Panc1 (cell line): ENCODE measurements at regions of chr3 and their contacts with region 1.

Region 1: DNA sequence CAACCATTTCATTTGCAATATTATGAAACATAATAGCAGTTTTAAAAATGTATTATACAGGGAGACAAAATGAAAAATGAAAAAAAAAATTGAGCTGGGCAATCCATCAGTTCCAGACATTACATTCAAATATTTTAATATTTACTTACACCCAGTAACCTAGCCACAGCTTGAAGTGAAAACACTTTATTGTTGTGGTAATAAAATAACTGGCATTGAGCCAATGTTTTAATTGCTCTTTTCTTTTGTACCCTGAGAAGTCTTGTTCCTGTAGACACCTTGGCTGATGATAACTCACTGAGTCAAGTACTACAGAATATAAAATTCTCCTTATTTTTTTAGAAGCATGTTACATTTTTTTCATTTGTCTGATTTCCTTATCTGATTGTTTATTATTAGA is 180.6 kb downstream of the ROBO1 start:
- DNase-seq: no peak
- ATAC-seq: no peak
- H3K4me3 ChIP-seq: no peak overlapping the region
- H3K27ac ChIP-seq: no peak overlapping the region
- H3K4me1 ChIP-seq: no peaks in the 10 kb centered on the region
- H3K27me3 ChIP-seq: no peaks in the 10 kb centered on the region
- CTCF ChIP-seq: no peak

Region 2: GRCh38 chr3:77726517-77726916 is 1860.6 kb before region 1 on chr3:
- CTCF ChIA-PET with region 1: no interaction called
- POLR2A ChIA-PET with region 1: no interaction called
- in situ Hi-C with region 1: no loop called
- intact Hi-C with region 1: no loop called
- DNase-seq: no peak
- ATAC-seq: no peak
- H3K4me3 ChIP-seq: no peak overlapping the region
- H3K27ac ChIP-seq: no peak overlapping the region
- H3K4me1 ChIP-seq: no peaks in the 10 kb centered on the region
- H3K27me3 ChIP-seq: no peaks in the 10 kb centered on the region
- CTCF ChIP-seq: no peak

Region 3: GRCh38 chr3:79436387-79436786 is 150.8 kb before region 1 on chr3:
- CTCF ChIA-PET with region 1: no interaction called
- POLR2A ChIA-PET with region 1: no interaction called
- in situ Hi-C with region 1: no loop called
- intact Hi-C with region 1: no loop called
- DNase-seq: no peak
- ATAC-seq: no peak
- H3K4me3 ChIP-seq: no peak overlapping the region
- H3K27ac ChIP-seq: no peak overlapping the region
- H3K4me1 ChIP-seq: no peaks in the 10 kb centered on the region
- H3K27me3 ChIP-seq: no peaks in the 10 kb centered on the region
- CTCF ChIP-seq: no peak

Region 4: DNA sequence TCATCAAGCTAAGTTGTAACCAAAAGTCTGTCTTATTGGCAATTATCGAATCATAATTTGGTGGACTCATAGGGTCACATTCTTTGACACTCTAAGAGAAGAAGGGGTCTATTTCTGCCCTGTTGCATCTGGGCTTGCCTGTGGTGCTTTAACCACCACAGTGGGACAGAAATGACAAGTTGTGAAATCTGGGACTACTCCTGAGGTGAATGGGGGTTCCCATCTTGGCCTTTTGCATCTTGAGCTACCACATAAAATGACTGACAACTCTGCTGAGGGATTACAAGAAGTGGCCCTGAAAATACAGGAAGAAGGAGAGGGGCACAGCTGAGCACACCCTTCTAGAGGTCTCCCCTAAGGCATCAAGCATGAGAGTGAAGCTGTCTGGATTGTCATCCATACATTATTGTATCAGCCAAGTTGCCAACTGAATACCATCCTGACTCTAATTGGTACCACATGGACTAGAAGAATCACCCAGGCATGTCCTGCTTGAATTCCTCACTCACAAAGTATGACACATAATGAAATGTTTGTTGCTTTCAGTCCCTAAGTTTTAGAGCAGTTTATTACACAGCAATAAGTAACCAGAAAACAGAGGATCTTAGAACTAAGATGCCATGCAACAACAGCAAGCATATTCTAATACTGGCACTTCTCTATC is 125.9 kb before region 1 on chr3:
- CTCF ChIA-PET with region 1: no interaction called
- POLR2A ChIA-PET with region 1: no interaction called
- in situ Hi-C with region 1: no loop called
- intact Hi-C with region 1: no loop called
- DNase-seq: no peak
- ATAC-seq: no peak
- H3K4me3 ChIP-seq: no peak overlapping the region
- H3K27ac ChIP-seq: no peak overlapping the region
- H3K4me1 ChIP-seq: no peaks in the 10 kb centered on the region
- H3K27me3 ChIP-seq: no peaks in the 10 kb centered on the region
- CTCF ChIP-seq: no peak

Region 5: GRCh38 chr3:79572930-79573329 is 14.2 kb before region 1 on chr3:
- CTCF ChIA-PET with region 1: no interaction called
- POLR2A ChIA-PET with region 1: no interaction called
- in situ Hi-C with region 1: no loop called
- intact Hi-C with region 1: loop called (anchors 2 kb)
- DNase-seq: no peak
- ATAC-seq: no peak
- H3K4me3 ChIP-seq: no peak overlapping the region
- H3K27ac ChIP-seq: no peak overlapping the region
- H3K4me1 ChIP-seq: no peaks in the 10 kb centered on the region
- H3K27me3 ChIP-seq: no peaks in the 10 kb centered on the region
- CTCF ChIP-seq: no peak

Region 6: DNA sequence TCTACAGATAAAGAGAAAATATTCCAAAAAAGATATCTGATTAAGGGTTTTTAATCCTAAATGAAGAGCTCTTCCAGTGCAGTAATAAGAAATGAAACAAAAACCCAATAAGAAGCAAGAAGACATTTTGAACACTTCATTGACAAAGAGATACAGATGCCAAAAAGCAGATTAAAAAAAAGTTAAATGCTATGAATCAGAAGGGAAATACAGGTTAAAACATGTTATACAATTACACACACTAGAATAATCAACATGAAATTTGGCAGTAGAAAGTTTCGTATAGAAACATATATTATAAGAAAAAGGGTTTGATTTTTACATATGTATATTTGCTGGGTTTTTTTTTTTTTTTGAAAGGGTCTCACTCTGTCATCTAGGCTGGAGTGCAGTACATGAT is 45.7 kb after region 1 on chr3:
- CTCF ChIA-PET with region 1: no interaction called
- POLR2A ChIA-PET with region 1: no interaction called
- in situ Hi-C with region 1: no loop called
- intact Hi-C with region 1: no loop called
- DNase-seq: no peak
- ATAC-seq: no peak
- H3K4me3 ChIP-seq: no peak overlapping the region
- H3K27ac ChIP-seq: no peak overlapping the region
- H3K4me1 ChIP-seq: no peaks in the 10 kb centered on the region
- H3K27me3 ChIP-seq: no peaks in the 10 kb centered on the region
- CTCF ChIP-seq: no peak

Region 7: GRCh38 chr3:79910337-79910736 is 323.2 kb after region 1 on chr3:
- CTCF ChIA-PET with region 1: interaction called, 12 read pairs
- POLR2A ChIA-PET with region 1: no interaction called
- in situ Hi-C with region 1: no loop called
- intact Hi-C with region 1: no loop called
- DNase-seq: no peak
- ATAC-seq: no peak
- H3K4me3 ChIP-seq: no peak overlapping the region
- H3K27ac ChIP-seq: no peak overlapping the region
- H3K4me1 ChIP-seq: no peaks in the 10 kb centered on the region
- H3K27me3 ChIP-seq: no peaks in the 10 kb centered on the region
- CTCF ChIP-seq: no peak